ENCODE measurements at regions of chr17 and their contacts with region 1.

Region 1: GRCh38 chr17:29568331-29569244 is at the start of gene TP53I13:
- H3K4me3 ChIP-seq: peak within 1 kb of the TSS; percentile 78
- H3K27ac ChIP-seq: peak within 1 kb of the TSS; percentile 96
- H3K4me1 ChIP-seq: peaks cover 13% of the 10 kb centered on the region
- CTCF ChIP-seq: peak; percentile 75

Region 2: DNA sequence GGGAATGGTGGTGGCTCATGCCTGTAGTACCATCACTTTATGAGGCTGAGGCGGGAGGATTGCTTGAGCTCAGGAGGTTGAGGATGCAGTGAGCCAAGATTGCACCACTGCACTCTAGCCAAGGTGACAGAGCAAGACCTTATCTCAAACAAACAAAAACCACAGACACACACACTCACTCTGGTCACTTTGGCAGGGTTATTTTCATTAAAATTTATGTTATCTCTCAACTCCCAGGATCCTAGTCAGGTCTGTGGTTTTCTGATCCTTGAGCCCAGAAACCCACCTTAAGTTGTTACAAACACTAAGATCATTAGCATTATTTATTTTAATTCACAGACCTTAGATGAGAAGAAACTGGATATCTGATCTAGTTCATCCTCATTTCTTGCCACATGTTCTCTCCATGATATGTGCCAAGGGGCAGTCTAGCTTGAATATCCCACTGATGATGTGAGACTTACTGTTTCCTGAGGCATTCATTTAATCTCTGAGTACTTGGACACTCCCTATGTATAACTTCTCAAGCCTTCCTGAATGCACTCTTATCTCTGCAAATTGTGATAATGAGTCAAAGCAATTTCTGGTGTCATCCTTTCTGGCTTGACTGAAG is 11.4 kb before region 1 on chr17:
- CTCF ChIA-PET with region 1: no interaction called
- POLR2A ChIA-PET with region 1: interaction called, 11 read pairs
- H3K4me3 ChIP-seq: no peak overlapping the region
- H3K27ac ChIP-seq: no peak overlapping the region
- H3K4me1 ChIP-seq: no peaks in the 10 kb centered on the region
- CTCF ChIP-seq: no peak

Region 3: DNA sequence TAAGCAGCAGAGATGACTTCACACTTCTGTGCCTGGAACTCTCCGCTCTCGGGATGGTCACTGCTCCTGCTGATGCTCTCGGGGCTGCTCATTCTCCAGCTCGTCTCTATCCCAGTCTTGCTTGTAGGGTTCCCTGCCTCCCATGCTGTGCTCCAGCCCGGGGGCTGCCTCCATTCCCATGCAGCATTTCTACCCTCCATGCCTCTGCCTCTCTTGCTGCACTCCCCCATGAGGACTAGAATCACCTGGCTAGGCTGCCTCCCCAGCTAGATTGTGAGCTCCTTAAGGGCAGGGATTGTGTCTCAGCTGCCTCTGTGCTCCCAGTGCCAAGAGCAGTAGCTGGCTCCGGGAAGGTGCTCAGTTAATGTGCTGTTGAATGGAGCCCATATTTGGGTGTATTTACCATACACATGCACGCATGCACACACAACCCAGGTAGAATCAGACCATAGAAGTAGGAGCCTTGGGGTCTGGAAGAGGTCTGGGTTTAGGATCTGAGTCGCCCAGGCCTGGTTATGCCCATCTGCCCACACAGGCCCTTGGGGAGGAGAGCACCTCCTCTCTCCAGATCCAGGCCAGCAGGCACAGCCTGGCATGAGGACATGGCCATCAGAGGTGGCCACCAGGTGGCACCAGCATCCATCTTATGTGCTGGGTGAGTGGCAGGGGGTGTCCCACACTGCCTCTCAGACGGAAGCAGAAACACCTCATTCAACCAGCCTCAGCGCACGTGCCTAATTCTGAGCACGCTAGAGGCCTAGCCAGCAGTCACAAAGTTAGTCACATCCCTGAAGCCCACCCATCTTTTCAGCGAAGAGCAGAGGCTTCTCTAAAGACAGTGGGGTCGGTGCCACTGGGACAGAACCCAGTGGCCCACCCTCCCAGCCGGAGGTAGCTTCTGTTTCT is 11.5 kb after region 1 on chr17:
- CTCF ChIA-PET with region 1: interaction called, 23 read pairs
- POLR2A ChIA-PET with region 1: interaction called, 3 read pairs
- H3K4me3 ChIP-seq: no peak overlapping the region
- H3K27ac ChIP-seq: no peak overlapping the region
- H3K4me1 ChIP-seq: no peaks in the 10 kb centered on the region
- CTCF ChIP-seq: peak; percentile 97